ENCODE measurements at regions of chr11 and their contacts with region 1.

Region 1: GRCh38 chr11:15650105-15650938 is 535.6 kb downstream of the INSC start:
- DNase-seq: peak; percentile 92
- H3K4me3 Mint-ChIP-seq: peak overlapping the region; percentile 7
- H3K27ac Mint-ChIP-seq: no peak overlapping the region
- H3K4me1 Mint-ChIP-seq: no peaks in the 10 kb centered on the region
- H3K27me3 Mint-ChIP-seq: peaks cover 14% of the 10 kb centered on the region
- CTCF ChIP-seq: peak; percentile 97

Region 2: DNA sequence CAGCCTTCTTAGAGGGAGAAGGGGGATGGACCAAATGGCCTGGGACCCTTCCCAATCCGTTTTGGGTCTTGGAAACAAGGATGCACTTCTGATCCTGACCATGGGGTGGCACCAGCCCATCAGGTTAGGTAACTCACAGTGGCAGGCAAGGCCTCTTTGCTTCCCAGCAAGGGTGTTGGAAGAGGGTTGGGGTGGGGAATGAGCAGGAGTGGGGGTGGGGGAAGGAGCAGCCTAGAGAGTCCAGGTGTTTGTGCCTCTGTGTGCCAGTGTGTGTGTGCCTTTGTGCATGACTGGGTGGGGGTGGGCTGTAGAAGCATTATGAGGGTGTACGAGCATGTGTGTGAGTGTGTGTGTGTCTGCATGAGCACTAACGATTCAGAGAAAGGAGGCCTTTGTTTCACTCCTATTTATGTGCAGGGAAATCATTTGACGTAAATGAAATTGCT is 322.5 kb before region 1 on chr11:
- CTCF ChIA-PET with region 1: interaction called, 9 read pairs
- POLR2A ChIA-PET with region 1: no interaction called
- intact Hi-C with region 1: loop called (anchors 5 kb)
- DNase-seq: peak; percentile 62
- H3K4me3 Mint-ChIP-seq: no peak overlapping the region
- H3K27ac Mint-ChIP-seq: no peak overlapping the region
- H3K4me1 Mint-ChIP-seq: no peaks in the 10 kb centered on the region
- H3K27me3 Mint-ChIP-seq: peaks cover 35% of the 10 kb centered on the region
- CTCF ChIP-seq: peak; percentile 64

Region 3: DNA sequence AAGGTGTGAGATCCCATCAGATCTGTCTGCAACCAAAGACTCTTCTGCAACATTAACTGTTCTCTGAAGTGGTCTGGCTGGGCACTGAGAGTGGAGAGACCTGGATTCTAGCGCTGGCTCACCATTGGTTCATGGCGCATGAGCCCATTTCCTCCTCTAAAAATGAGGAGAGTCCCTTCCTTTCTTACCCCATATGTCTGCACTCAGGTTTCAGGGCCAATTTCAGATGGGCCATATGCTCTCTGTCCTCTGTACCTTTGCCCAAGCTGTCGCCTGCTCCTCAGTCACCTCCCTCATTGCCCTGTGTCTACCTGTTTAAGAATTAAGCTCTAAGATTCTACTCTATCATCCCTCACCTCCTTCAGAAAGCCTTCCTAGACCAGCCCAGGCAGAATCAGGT is 50.9 kb before region 1 on chr11:
- CTCF ChIA-PET with region 1: no interaction called
- POLR2A ChIA-PET with region 1: no interaction called
- intact Hi-C with region 1: no loop called
- DNase-seq: no peak
- H3K4me3 Mint-ChIP-seq: no peak overlapping the region
- H3K27ac Mint-ChIP-seq: no peak overlapping the region
- H3K4me1 Mint-ChIP-seq: peaks cover 5% of the 10 kb centered on the region
- H3K27me3 Mint-ChIP-seq: peaks cover 16% of the 10 kb centered on the region
- CTCF ChIP-seq: no peak

Region 4: DNA sequence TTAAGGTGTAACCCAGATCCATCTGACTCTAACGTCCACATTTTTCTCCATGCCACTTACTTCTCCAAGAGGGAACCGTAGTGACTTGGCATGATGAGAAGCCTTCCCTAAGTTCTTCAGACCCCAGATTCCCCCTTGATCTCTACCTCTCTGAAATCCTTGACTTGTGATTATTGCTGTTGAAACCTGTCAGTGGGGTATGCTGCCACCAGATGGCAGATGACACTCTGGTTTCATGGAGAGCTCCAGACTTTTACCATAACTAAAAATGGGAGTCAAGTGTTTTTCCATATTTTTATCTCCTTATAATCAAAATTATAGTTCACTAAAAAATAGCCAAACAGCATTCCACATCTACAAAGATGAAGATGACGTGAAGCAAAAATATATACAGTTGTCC is 201.9 kb after region 1 on chr11:
- CTCF ChIA-PET with region 1: interaction called, 4 read pairs
- POLR2A ChIA-PET with region 1: no interaction called
- intact Hi-C with region 1: loop called (anchors 5 kb)
- DNase-seq: peak; percentile 43
- H3K4me3 Mint-ChIP-seq: no peak overlapping the region
- H3K27ac Mint-ChIP-seq: no peak overlapping the region
- H3K4me1 Mint-ChIP-seq: no peaks in the 10 kb centered on the region
- H3K27me3 Mint-ChIP-seq: no peaks in the 10 kb centered on the region
- CTCF ChIP-seq: peak; percentile 56

Region 5: GRCh38 chr11:15988693-15989231 is 338.4 kb after region 1 on chr11:
- CTCF ChIA-PET with region 1: interaction called, 5 read pairs
- POLR2A ChIA-PET with region 1: no interaction called
- intact Hi-C with region 1: loop called (anchors 10 kb)
- DNase-seq: peak; percentile 11
- H3K4me3 Mint-ChIP-seq: no peak overlapping the region
- H3K27ac Mint-ChIP-seq: no peak overlapping the region
- H3K4me1 Mint-ChIP-seq: no peaks in the 10 kb centered on the region
- H3K27me3 Mint-ChIP-seq: no peaks in the 10 kb centered on the region
- CTCF ChIP-seq: peak; percentile 7